Vagina (tissue), 2 donors: ENCODE measurements at regions of chr2 and their contacts with region 1.

Region 1: GRCh38 chr2:224357098-224357901 is 44.6 kb downstream of the FAM124B start:
- DNase-seq: no peak
- H3K4me3 ChIP-seq: no peak overlapping the region
- H3K27ac ChIP-seq: no peak overlapping the region
- H3K4me1 ChIP-seq: no peaks in the 10 kb centered on the region
- H3K27me3 ChIP-seq: no peaks in the 10 kb centered on the region
- CTCF ChIP-seq: peak; percentile 67 to 89 (median 78)
- POLR2A ChIP-seq: no peak

Region 2: DNA sequence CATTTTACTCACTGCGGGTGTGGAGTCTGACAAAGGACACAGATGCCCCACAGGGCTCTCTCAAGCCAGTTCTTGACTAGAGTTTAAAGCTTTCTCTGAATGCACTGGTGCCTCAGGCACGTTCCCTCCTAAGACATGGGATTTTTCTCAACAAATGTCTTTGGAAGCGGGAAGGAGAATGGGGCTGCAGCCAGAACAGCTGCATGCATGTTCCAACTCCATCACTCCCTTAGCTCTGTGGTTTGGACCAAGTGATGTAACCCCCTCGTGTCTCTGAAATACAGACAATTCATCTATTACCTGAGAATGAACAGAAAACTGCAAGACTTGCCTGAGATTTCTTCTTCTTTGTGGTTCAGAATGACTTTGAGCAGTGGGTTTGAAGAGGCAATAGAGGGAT is 176.5 kb before region 1 on chr2:
- intact Hi-C with region 1: no loop called
- DNase-seq: no peak
- H3K4me3 ChIP-seq: no peak overlapping the region
- H3K27ac ChIP-seq: no peak overlapping the region
- H3K4me1 ChIP-seq: no peaks in the 10 kb centered on the region
- H3K27me3 ChIP-seq: no peaks in the 10 kb centered on the region
- CTCF ChIP-seq: no peak
- POLR2A ChIP-seq: no peak

Region 3: DNA sequence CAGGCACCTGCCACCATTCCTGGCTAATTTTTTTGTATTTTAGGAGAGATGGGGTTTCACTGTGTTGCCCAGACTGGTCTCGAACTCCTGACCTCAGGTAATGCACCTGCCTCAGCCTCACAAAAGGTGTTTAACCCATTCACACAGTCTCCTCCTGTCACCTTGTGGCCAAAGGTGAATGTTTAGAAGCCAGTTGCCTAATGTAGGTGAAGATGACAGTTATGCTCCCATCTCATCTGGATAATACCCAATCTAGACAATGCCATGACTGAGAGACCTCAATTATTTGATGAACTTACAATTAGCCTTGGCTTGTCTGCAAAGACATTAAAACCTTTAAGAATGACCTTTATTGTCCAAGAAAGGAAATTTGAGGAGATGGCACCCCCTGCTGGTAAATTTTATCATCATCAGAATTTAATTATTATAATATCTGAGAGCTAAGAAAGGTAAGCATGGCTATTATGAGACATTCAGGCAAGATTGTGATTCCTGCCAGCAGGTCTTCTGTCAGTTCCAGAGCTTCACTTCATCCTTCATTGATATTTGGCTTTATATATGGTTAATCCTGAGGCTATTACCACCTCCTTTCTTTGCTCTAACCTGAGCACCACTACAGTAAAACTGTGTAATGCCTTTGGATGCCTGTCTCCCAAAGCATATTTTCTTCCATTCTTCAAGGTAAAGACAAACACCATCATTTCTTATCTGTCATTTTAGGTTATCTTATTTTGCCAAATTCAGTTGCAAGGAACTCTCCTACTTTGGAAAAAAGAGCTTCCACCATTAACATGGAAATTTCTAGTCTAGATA is 73.0 kb before region 1 on chr2:
- intact Hi-C with region 1: no loop called
- DNase-seq: no peak
- H3K4me3 ChIP-seq: no peak overlapping the region
- H3K27ac ChIP-seq: no peak overlapping the region
- H3K4me1 ChIP-seq: no peaks in the 10 kb centered on the region
- H3K27me3 ChIP-seq: no peaks in the 10 kb centered on the region
- CTCF ChIP-seq: peak; percentile 58 to 84 (median 66)
- POLR2A ChIP-seq: no peak

Region 4: DNA sequence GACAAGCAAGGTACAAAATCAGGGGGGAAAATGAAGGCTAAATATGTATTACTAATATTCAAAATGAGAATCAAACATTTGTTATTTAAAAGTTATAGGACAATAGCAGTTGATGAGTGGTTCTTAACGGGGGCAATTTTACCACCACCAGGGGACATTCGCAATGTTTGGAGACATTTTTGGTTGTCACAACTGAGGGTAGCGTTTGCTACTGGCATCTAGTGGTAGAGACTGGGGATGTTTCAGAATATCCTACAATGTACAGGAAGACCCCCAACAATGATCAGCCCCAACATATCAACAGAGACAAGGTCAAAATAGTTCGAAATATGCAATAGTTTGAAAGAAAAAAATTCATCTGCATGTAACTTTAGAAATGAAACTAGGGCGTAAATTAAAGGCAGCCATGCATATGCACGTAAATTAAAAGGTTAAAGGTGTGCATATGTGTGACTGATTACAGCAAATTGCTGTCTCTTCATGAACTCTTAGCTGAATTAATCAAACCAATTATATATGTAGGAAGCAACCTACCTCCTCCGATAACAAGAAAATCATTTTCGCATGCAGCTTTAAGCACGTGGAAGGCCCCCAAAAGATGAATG is 289.0 kb after region 1 on chr2:
- intact Hi-C with region 1: loop called (anchors 5 kb)
- DNase-seq: no peak
- H3K4me3 ChIP-seq: no peak overlapping the region
- H3K27ac ChIP-seq: no peak overlapping the region
- H3K4me1 ChIP-seq: no peaks in the 10 kb centered on the region
- H3K27me3 ChIP-seq: no peaks in the 10 kb centered on the region
- CTCF ChIP-seq: peak in 1 of 3 experiments; percentile 8
- POLR2A ChIP-seq: no peak